Stomach (tissue), 19 donors: ENCODE measurements at regions of chr3 and their contacts with region 1.

Region 1: DNA sequence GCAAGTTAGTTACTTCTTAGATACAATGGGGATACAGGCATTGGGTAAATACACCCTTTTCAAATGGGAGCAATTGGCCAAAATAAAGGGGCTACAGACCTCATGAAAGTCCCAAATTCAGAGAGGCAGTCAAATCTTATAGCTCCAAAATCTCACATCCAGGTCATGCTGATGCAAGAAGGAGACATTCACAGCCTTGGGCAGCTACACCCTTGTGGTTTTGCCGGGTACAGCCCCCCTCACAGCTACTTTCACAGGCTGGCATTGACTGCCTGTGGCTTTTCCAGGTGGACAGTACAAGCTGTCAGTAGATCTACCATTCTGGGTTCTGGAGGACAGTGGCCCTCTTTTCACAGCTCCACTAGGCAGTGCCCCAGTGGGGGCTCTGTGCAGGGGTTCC is 17.5 kb upstream of the PLSCR1 start:
- DNase-seq: no peak
- H3K4me3 ChIP-seq: no peak overlapping the region
- H3K27ac ChIP-seq: no peak overlapping the region
- H3K4me1 ChIP-seq: no peaks in the 10 kb centered on the region
- H3K27me3 ChIP-seq: no peaks in the 10 kb centered on the region
- CTCF ChIP-seq: no peak
- EP300 ChIP-seq: no peak
- POLR2A ChIP-seq: no peak

Region 2: DNA sequence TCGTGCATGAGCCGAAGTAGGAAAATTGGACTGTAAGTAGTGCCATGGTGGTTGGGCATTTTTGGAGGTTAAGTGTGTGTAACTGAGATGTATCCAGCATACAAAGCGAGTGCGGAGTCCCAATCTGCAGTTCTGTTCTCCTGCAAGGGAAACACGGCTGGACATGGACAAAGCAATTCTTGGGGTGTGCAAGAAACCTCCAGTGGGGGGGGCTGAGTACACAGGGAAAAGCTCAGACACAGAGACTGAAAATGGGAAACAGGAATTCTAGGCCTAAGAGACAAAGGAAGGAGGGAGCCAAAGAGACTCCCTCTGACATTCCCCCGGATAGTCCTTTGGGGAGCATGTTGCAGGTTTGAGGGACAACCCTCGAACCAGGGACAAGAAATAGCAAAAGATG is 227.7 kb before region 1 on chr3:
- intact Hi-C with region 1: loop called (anchors 10 kb)
- DNase-seq: no peak
- H3K4me3 ChIP-seq: no peak overlapping the region
- H3K27ac ChIP-seq: no peak overlapping the region
- H3K4me1 ChIP-seq: no peaks in the 10 kb centered on the region
- H3K27me3 ChIP-seq: no peaks in the 10 kb centered on the region
- CTCF ChIP-seq: peak in 1 of 7 experiments; percentile 14
- EP300 ChIP-seq: no peak
- POLR2A ChIP-seq: no peak

Region 3: GRCh38 chr3:146431240-146431639 is 130.6 kb before region 1 on chr3:
- intact Hi-C with region 1: no loop called
- DNase-seq: peak in 1 of 2 donors; percentile 63
- H3K4me3 ChIP-seq: no peak overlapping the region
- H3K27ac ChIP-seq: no peak overlapping the region
- H3K4me1 ChIP-seq: no peaks in the 10 kb centered on the region
- H3K27me3 ChIP-seq: no peaks in the 10 kb centered on the region
- CTCF ChIP-seq: no peak
- EP300 ChIP-seq: no peak
- POLR2A ChIP-seq: no peak